GM12878 (cell line): ENCODE measurements at regions of chr9 and their contacts with region 1.

Region 1: GRCh38 chr9:135961277-135961705 is at the start of gene UBAC1:
- DNase-seq: peak; percentile 63
- ATAC-seq: peak; percentile 93
- H3K4me3 ChIP-seq: peak within 1 kb of the TSS; percentile 92
- H3K27ac ChIP-seq: peak within 1 kb of the TSS; percentile 76
- H3K4me1 ChIP-seq: peaks cover 9% of the 10 kb centered on the region
- H3K27me3 ChIP-seq: no peaks in the 10 kb centered on the region; a peak in 1 of 4 replicates
- CTCF ChIP-seq: peak; percentile 11 to 27 (median 23); a peak in 4 of 6 replicates
- EP300 ChIP-seq: no peak
- POLR2A ChIP-seq: no peak
- RAD21 ChIP-seq: no peak
- polyA plus RNA-seq, gene UBAC1: 16.7 to 20.7 TPM

Region 2: DNA sequence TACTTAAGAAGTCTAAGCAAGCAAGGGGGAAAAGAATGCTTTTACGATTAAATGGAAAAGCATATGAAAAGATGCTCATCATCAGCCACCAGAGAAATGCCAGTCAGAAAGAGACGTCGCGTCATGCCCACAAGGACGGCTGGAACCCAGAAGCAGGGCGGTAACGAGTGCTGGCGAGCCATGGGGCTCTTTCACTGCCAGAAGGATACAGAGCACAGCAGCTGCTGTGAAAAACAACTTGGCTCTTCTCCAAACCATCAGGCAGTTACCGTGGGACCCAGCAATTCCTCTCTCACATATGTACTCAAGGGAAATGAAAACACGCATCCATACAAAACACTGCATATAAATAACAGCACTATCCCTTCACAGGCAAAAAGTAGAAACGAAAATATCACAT is 149.5 kb before region 1 on chr9:
- CTCF ChIA-PET with region 1: no interaction called
- POLR2A ChIA-PET with region 1: no interaction called
- RAD21 ChIA-PET with region 1: no interaction called
- SMC1A ChIA-PET with region 1: no interaction called
- in situ Hi-C with region 1: no loop called
- intact Hi-C with region 1: no loop called
- DNase-seq: no peak
- ATAC-seq: no peak
- H3K4me3 ChIP-seq: no peak overlapping the region
- H3K27ac ChIP-seq: no peak overlapping the region
- H3K4me1 ChIP-seq: no peaks in the 10 kb centered on the region
- H3K27me3 ChIP-seq: no peaks in the 10 kb centered on the region
- CTCF ChIP-seq: no peak
- EP300 ChIP-seq: no peak
- POLR2A ChIP-seq: no peak
- RAD21 ChIP-seq: no peak

Region 3: DNA sequence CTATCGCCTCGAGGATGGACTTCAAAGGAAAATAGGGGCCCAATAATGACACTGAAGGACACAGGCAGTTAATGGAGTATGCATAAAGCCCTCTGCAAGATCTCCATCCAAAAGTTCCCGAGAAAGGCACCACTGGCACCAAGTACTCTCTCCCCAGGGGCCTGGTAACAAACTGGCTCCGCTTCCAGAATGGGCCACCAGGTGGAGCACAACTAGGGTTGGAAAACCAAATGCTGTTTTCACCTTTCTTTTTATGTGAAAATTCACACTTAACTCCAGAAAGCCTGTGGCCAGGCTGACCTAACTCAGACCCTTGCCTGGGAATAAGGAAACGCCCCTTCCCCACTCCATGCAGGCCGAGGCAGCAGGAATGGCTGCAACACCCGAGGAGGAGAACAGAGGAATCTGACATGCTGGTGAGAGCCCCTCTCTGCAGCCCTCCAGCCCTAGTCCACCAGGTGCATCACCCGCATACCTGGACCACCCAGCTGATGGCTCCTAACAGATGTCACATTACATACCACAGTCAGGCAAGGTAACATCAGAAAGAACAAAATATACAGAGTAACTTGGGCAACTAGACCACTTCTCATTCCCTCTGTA is 96.7 kb before region 1 on chr9:
- CTCF ChIA-PET with region 1: interaction called, 14 read pairs
- POLR2A ChIA-PET with region 1: interaction called, 5 read pairs
- RAD21 ChIA-PET with region 1: no interaction called
- SMC1A ChIA-PET with region 1: no interaction called
- in situ Hi-C with region 1: no loop called
- intact Hi-C with region 1: no loop called
- DNase-seq: no peak
- ATAC-seq: peak; percentile 82
- H3K4me3 ChIP-seq: no peak overlapping the region
- H3K27ac ChIP-seq: no peak overlapping the region
- H3K4me1 ChIP-seq: no peaks in the 10 kb centered on the region
- H3K27me3 ChIP-seq: no peaks in the 10 kb centered on the region
- CTCF ChIP-seq: peak; percentile 76 to 86 (median 81)
- EP300 ChIP-seq: no peak
- POLR2A ChIP-seq: no peak
- RAD21 ChIP-seq: peak; percentile 64

Region 4: GRCh38 chr9:135907431-135908092 is 53.7 kb before region 1 on chr9 and contains the start of gene CAMSAP1:
- CTCF ChIA-PET with region 1: no interaction called
- POLR2A ChIA-PET with region 1: interaction called, 3 read pairs
- RAD21 ChIA-PET with region 1: no interaction called
- SMC1A ChIA-PET with region 1: no interaction called
- in situ Hi-C with region 1: no loop called
- intact Hi-C with region 1: loop called (anchors 5 kb)
- DNase-seq: peak; percentile 51
- ATAC-seq: peak; percentile 94
- H3K4me3 ChIP-seq: peak within 1 kb of the TSS; percentile 84
- H3K27ac ChIP-seq: peak within 1 kb of the TSS; percentile 50
- H3K4me1 ChIP-seq: peaks cover 27% of the 10 kb centered on the region
- H3K27me3 ChIP-seq: no peaks in the 10 kb centered on the region
- CTCF ChIP-seq: no peak
- EP300 ChIP-seq: no peak
- POLR2A ChIP-seq: peak; percentile 81
- RAD21 ChIP-seq: no peak
- polyA plus RNA-seq, gene CAMSAP1: 1.8 to 2.0 TPM

Region 5: DNA sequence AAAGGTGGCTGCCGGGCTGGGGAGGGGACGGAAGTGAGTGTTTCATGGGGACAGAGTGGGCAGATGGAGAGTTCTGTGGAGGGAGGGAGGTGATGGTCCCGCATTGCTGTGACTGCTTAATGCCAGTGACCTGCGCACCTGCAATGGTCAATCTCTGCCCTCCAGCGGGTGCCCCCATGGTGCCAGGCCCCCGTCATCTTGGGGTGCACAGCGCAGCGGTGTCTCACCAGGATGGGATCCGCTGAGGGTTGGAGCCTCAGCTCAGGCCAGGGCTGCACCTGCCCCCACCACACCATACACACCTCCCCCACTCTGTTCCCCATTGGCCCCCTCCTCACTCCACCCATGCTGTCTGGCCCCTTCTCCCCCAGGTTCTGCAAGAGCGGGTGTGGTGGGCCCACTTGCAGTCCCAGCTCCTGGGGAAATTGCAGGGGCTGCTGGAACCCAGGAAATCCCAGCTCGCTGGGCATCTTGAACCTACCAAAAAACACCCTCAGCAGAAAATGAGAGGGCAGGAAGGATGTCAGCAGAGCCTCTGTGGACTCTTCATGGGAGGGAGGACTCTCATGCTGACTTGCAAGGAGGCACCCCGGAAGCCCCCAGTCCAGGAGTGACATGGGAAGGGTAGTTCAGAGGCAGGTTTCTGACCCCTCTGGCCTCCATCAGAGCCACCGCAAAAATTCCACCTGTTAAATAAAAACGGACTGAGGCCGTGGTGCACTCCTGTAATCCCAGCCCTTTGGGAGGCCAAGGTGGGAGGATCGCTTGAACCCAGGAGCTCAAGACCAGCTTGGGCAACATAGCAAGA is 41.8 kb before region 1 on chr9:
- CTCF ChIA-PET with region 1: no interaction called
- POLR2A ChIA-PET with region 1: no interaction called
- RAD21 ChIA-PET with region 1: no interaction called
- SMC1A ChIA-PET with region 1: no interaction called
- in situ Hi-C with region 1: no loop called
- intact Hi-C with region 1: no loop called
- DNase-seq: no peak
- ATAC-seq: no peak
- H3K4me3 ChIP-seq: no peak overlapping the region
- H3K27ac ChIP-seq: no peak overlapping the region
- H3K4me1 ChIP-seq: no peaks in the 10 kb centered on the region
- H3K27me3 ChIP-seq: no peaks in the 10 kb centered on the region
- CTCF ChIP-seq: no peak
- EP300 ChIP-seq: no peak
- POLR2A ChIP-seq: no peak
- RAD21 ChIP-seq: no peak

Region 6: GRCh38 chr9:136016882-136017812 is 55.9 kb after region 1 on chr9:
- CTCF ChIA-PET with region 1: no interaction called
- POLR2A ChIA-PET with region 1: no interaction called
- RAD21 ChIA-PET with region 1: no interaction called
- SMC1A ChIA-PET with region 1: no interaction called
- in situ Hi-C with region 1: no loop called
- intact Hi-C with region 1: no loop called
- DNase-seq: no peak
- ATAC-seq: no peak
- H3K4me3 ChIP-seq: no peak overlapping the region
- H3K27ac ChIP-seq: no peak overlapping the region
- H3K4me1 ChIP-seq: no peaks in the 10 kb centered on the region
- H3K27me3 ChIP-seq: no peaks in the 10 kb centered on the region
- CTCF ChIP-seq: no peak
- EP300 ChIP-seq: no peak
- POLR2A ChIP-seq: no peak
- RAD21 ChIP-seq: no peak

Region 7: DNA sequence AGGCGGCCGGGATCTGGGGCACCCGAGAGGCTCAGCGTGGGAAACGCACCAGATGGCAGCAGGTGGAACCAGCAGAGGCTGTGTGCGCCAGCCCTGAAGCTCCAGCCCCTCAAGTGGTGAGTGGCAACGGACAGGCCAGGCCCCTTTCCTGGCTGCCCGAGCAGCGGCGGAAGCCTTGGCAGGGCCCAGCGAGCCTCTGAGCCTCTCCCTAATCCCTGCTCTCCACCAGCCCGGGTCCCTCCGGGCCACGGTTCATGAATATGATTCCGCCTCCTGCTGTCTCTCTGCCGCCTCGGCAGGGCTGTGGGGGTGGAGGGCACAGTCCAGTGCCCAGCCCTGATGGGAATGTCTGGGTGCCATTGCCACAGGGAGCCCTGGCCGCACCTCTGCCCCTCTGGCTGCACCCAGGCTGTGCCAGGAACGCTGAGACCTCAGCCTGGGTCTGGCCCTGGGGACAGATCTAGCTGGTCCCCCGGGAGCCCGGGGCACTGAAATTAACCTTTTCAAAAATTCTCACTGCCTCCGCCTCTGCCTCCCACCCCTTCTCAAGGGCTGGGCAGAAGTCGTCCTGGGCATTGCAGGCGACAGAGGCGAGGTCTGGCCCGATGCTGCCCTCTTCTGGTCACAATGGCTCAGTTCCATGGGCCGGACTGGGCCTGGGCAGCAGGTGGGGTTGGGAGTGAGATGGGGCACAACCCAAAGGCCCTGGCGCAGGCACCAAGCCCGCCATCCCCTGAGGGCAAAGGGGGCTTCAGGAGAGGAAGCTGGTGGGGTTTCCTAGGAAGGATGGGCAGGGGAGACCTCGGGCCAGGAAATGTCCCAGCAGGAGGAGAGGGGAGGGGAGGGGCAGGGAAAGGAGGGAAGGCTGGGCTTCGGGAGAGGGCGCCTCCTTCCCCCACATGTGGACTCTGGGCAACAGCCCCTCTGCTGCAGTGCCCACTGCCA is 322.3 kb after region 1 on chr9:
- CTCF ChIA-PET with region 1: no interaction called
- POLR2A ChIA-PET with region 1: no interaction called
- RAD21 ChIA-PET with region 1: no interaction called
- SMC1A ChIA-PET with region 1: no interaction called
- in situ Hi-C with region 1: no loop called
- intact Hi-C with region 1: loop called (anchors 10 kb)
- DNase-seq: peak; percentile 45
- ATAC-seq: peak; percentile 99
- H3K4me3 ChIP-seq: no peak overlapping the region
- H3K27ac ChIP-seq: no peak overlapping the region
- H3K4me1 ChIP-seq: no peaks in the 10 kb centered on the region
- H3K27me3 ChIP-seq: no peaks in the 10 kb centered on the region
- CTCF ChIP-seq: peak; percentile 88 to 93 (median 91)
- EP300 ChIP-seq: no peak
- POLR2A ChIP-seq: no peak
- RAD21 ChIP-seq: peak; percentile 89